Caco-2 (cell line): ENCODE measurements at regions of chr14 and their contacts with region 1.

Region 1: GRCh38 chr14:67166450-67166853 is 22.8 kb upstream of the GARIN2 start:
- DNase-seq: peak; percentile 44 to 56
- H3K4me3 ChIP-seq: no peak overlapping the region
- H3K4me3 Mint-ChIP-seq: no peak overlapping the region
- H3K27ac Mint-ChIP-seq: no peak overlapping the region
- H3K4me1 ChIP-seq: peaks cover 37% of the 10 kb centered on the region
- H3K4me1 Mint-ChIP-seq: peaks cover 13% of the 10 kb centered on the region
- H3K27me3 ChIP-seq: no peaks in the 10 kb centered on the region
- H3K27me3 Mint-ChIP-seq: no peaks in the 10 kb centered on the region
- CTCF ChIP-seq: peak; percentile 64 to 80

Region 2: GRCh38 chr14:67151131-67151569 is 15.3 kb before region 1 on chr14:
- CTCF ChIA-PET with region 1: no interaction called
- POLR2A ChIA-PET with region 1: no interaction called
- intact Hi-C with region 1: no loop called
- DNase-seq: peak in 1 of 2 experiments; percentile 20
- H3K4me3 ChIP-seq: no peak overlapping the region
- H3K4me3 Mint-ChIP-seq: no peak overlapping the region
- H3K27ac Mint-ChIP-seq: no peak overlapping the region
- H3K4me1 ChIP-seq: peaks cover 7% of the 10 kb centered on the region; the same call in 1 of the 2 replicates
- H3K4me1 Mint-ChIP-seq: no peaks in the 10 kb centered on the region
- H3K27me3 ChIP-seq: no peaks in the 10 kb centered on the region
- H3K27me3 Mint-ChIP-seq: no peaks in the 10 kb centered on the region
- CTCF ChIP-seq: peak in 1 of 2 experiments; percentile 33

Region 3: DNA sequence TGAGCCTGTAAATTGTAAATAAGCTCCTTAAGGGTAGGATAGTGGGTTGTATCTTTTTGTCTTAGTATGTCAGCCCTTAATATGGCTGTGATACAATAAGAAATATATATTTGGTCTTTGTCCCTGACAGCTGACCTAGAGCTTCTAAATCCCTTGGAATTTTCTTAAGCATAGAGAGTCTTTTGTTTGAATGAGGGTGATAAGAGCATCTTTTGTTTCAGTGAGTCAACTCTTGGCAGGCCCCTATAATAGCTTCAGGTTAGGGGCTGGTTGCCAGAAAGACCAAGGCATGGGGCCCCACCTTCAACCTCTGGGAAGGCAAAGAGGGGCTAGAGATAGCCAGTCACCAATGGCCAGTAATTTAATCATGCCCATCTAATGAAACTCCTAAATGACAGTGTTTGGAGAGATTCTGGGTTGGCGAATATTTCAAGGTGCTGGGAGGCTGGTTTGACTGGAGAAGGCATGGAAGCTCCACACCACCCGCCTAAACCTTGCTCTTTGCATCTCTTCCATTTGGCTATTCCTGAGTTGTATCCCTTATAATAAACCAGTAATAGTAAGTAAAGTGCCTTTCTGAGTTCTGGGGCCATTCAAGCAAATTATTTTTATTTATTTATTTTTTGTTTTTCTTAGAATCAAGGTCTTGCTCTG is 85.2 kb after region 1 on chr14:
- CTCF ChIA-PET with region 1: no interaction called
- POLR2A ChIA-PET with region 1: no interaction called
- intact Hi-C with region 1: no loop called
- DNase-seq: no peak
- H3K4me3 ChIP-seq: no peak overlapping the region
- H3K4me3 Mint-ChIP-seq: no peak overlapping the region
- H3K27ac Mint-ChIP-seq: no peak overlapping the region
- H3K4me1 ChIP-seq: peaks cover 46% of the 10 kb centered on the region
- H3K4me1 Mint-ChIP-seq: peaks cover 24% of the 10 kb centered on the region
- H3K27me3 ChIP-seq: no peaks in the 10 kb centered on the region
- H3K27me3 Mint-ChIP-seq: no peaks in the 10 kb centered on the region
- CTCF ChIP-seq: no peak

Region 4: DNA sequence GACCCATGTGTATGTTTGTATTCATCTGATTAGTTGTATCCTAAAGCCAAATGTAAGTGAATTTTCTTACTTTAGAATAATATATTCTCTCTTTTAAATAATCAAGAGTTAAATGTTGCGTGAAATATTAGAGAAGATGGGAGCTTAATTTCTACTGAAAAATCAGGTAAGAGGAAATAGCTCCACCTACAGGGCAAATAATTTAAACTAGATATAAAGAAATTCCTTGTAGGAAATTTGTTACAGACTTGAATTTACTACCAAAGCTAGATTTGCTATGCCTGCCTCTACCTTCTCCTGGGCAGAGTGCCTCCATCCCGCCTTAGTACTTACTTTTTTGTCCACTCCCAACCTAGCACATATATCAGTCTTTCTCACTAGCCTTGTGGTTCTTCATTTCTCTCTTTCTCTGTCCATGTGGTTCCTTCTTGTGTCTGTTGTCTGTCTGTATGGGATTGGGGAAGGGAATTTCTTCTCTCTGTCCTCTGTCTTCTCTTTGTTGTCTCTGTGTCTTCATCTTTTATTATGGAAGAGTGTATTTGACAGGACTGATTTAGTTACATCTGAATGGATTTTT is 119.5 kb after region 1 on chr14:
- CTCF ChIA-PET with region 1: interaction called, 24 read pairs
- POLR2A ChIA-PET with region 1: no interaction called
- intact Hi-C with region 1: loop called (anchors 1 kb)
- DNase-seq: peak in 1 of 2 experiments; percentile 25
- H3K4me3 ChIP-seq: no peak overlapping the region
- H3K4me3 Mint-ChIP-seq: no peak overlapping the region
- H3K27ac Mint-ChIP-seq: no peak overlapping the region
- H3K4me1 ChIP-seq: no peaks in the 10 kb centered on the region
- H3K4me1 Mint-ChIP-seq: no peaks in the 10 kb centered on the region
- H3K27me3 ChIP-seq: no peaks in the 10 kb centered on the region
- H3K27me3 Mint-ChIP-seq: no peaks in the 10 kb centered on the region
- CTCF ChIP-seq: peak; percentile 37 to 61

Region 5: GRCh38 chr14:67335781-67336180 is 169.3 kb after region 1 on chr14:
- CTCF ChIA-PET with region 1: interaction called, 6 read pairs
- POLR2A ChIA-PET with region 1: no interaction called
- intact Hi-C with region 1: loop called (anchors 1 kb)
- DNase-seq: peak in 1 of 2 experiments; percentile 30
- H3K4me3 ChIP-seq: no peak overlapping the region
- H3K4me3 Mint-ChIP-seq: no peak overlapping the region
- H3K27ac Mint-ChIP-seq: no peak overlapping the region
- H3K4me1 ChIP-seq: peaks cover 12% of the 10 kb centered on the region
- H3K4me1 Mint-ChIP-seq: peaks cover 8% of the 10 kb centered on the region
- H3K27me3 ChIP-seq: no peaks in the 10 kb centered on the region
- H3K27me3 Mint-ChIP-seq: no peaks in the 10 kb centered on the region
- CTCF ChIP-seq: peak; percentile 40 to 53

Region 6: DNA sequence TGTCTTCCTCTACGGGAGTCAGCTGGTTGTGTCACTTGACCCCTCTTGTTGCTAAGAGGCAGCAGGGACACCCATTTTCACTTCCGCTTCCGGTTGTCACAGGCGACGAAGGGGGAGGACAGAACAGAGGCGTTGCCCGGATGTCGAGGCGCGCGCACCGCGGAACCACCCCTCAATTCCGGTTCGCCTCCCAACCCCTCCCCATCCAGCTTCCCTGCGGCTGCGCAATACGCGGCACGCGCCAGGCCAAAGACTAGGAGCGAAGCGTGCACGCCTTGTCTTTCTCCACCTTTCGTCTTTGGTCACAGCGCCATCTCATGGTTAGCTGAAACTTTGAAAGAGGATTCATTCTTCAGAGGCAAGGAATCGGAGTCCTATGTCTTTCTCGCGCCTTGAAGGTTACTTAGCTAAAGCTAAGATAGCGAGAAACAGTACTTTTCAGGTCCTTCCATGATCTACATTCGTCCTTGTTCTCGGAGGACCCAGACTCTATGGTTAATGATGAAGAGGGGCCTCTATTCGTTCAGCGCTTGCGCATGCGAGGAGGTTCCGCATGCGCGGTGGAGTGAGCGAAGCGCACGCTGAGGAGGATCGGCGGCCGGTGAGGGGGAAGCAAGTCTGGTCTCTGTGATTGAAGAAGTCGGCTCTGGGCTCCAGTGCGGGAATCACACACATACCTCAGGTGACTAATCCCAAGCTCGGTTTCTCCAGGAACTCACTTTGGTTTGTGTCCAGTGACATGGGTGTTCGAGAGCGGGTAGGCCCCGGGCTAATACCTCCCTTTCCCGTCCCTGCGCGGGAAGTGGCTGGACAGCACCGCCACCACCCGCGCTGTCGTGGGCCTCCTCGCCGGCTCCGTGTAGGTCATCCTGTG is 193.6 kb after region 1 on chr14 and contains the starts of genes ATP6V1D and EIF2S1:
- CTCF ChIA-PET with region 1: interaction called, 3 read pairs
- POLR2A ChIA-PET with region 1: no interaction called
- intact Hi-C with region 1: loop called (anchors 1 kb)
- DNase-seq: peak; percentile 99
- H3K4me3 ChIP-seq: peak within 1 kb of the TSS; percentile 97
- H3K4me3 Mint-ChIP-seq: peak within 1 kb of the TSS; percentile 85
- H3K27ac Mint-ChIP-seq: peak within 1 kb of the TSS; percentile 96
- H3K4me1 ChIP-seq: peaks cover 6% of the 10 kb centered on the region; the same call in 1 of the 2 replicates
- H3K4me1 Mint-ChIP-seq: peaks cover 7% of the 10 kb centered on the region
- H3K27me3 ChIP-seq: no peaks in the 10 kb centered on the region
- H3K27me3 Mint-ChIP-seq: no peaks in the 10 kb centered on the region
- CTCF ChIP-seq: peak; percentile 89 to 95
- total RNA-seq, gene ATP6V1D: 60.0 and 77.4 TPM in 2 replicates
- total RNA-seq, gene EIF2S1: 144 and 156 TPM in 2 replicates